ENCODE measurements at regions of chrX and their contacts with region 1.

Region 1: GRCh38 chrX:36116222-36116621 is 196.7 kb downstream of the CFAP47 start:
- DNase-seq: no peak

Region 2: DNA sequence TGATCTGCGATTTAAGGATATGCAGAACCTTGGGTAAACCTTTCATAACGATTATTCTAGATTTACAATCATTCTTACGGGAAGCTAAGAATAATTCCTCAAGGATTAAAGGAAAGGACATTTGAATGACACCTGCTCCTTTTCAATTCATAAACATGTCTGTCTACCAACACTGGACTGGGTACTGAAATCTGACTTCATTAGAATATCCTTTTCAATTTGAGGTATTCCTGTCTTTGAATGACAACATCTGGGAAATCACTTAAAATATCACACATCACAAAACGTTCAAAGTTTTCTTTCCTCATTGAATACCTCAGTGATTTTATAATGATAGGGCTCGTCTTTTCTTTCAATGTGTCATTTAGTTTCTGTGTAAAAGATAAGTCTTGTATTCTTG is 109.0 kb before region 1 on chrX:
- intact Hi-C with region 1: loop called in 1 of 2 experiments (anchors 2 kb)
- DNase-seq: no peak

Region 3: GRCh38 chrX:36102425-36102824 is 13.8 kb before region 1 on chrX:
- intact Hi-C with region 1: loop called in 1 of 2 experiments (anchors 1 kb)
- DNase-seq: no peak

Region 4: GRCh38 chrX:36310136-36310535 is 193.9 kb after region 1 on chrX:
- intact Hi-C with region 1: no loop called
- DNase-seq: no peak

Region 5: DNA sequence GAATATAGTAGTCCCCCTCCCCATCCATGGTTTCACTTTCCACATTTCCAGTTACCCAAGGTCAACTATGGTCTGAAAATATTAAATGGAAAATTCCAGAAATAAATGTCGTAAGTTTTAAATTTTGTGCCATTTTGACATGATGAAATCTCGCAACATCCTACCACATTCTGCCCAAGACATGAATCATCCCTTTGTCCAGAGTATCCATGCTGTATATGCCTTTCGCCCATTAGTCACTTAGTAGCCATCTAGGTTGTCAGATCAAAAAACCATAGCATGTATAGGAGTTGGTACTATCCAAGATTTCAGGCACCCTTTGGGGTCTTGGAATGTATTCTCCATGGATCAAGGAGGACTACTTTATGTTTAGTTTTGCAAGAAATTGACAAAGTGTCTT is 1241.2 kb after region 1 on chrX:
- intact Hi-C with region 1: no loop called
- DNase-seq: no peak

Measured in posterior vena cava (tissue), 2 donors.